Activated CD8-positive, alpha-beta T cell treated with anti-CD3 and anti-CD28 coated beads for 36 hours (primary cell): ENCODE measurements at regions of chr4 and their contacts with region 1.

Region 1: GRCh38 chr4:148376151-148376550 is 66.1 kb downstream of the NR3C2 start:
- DNase-seq: peak; percentile 56
- ATAC-seq: peak; percentile 55
- H3K4me3 Mint-ChIP-seq: peak overlapping the region; percentile 42
- H3K27ac Mint-ChIP-seq: peak overlapping the region; percentile 81
- H3K4me1 Mint-ChIP-seq: peaks cover 33% of the 10 kb centered on the region
- H3K27me3 Mint-ChIP-seq: no peaks in the 10 kb centered on the region
- CTCF ChIP-seq: no peak

Region 2: GRCh38 chr4:148441986-148442831 is 66.1 kb after region 1 on chr4 and contains the start of gene NR3C2:
- CTCF ChIA-PET with region 1: no interaction called
- POLR2A ChIA-PET with region 1: no interaction called
- intact Hi-C with region 1: loop called (anchors 10 kb)
- DNase-seq: peak; percentile 99
- ATAC-seq: peak; percentile 88
- H3K4me3 Mint-ChIP-seq: peak within 1 kb of the TSS; percentile 94
- H3K27ac Mint-ChIP-seq: peak within 1 kb of the TSS; percentile 94
- H3K4me1 Mint-ChIP-seq: peaks cover 48% of the 10 kb centered on the region
- H3K27me3 Mint-ChIP-seq: peaks cover 2% of the 10 kb centered on the region
- CTCF ChIP-seq: no peak
- total RNA-seq, gene NR3C2: 6.1 to 6.4 TPM